Natural killer cell (primary cell): ENCODE measurements at regions of chr3 and their contacts with region 1.

Region 1: DNA sequence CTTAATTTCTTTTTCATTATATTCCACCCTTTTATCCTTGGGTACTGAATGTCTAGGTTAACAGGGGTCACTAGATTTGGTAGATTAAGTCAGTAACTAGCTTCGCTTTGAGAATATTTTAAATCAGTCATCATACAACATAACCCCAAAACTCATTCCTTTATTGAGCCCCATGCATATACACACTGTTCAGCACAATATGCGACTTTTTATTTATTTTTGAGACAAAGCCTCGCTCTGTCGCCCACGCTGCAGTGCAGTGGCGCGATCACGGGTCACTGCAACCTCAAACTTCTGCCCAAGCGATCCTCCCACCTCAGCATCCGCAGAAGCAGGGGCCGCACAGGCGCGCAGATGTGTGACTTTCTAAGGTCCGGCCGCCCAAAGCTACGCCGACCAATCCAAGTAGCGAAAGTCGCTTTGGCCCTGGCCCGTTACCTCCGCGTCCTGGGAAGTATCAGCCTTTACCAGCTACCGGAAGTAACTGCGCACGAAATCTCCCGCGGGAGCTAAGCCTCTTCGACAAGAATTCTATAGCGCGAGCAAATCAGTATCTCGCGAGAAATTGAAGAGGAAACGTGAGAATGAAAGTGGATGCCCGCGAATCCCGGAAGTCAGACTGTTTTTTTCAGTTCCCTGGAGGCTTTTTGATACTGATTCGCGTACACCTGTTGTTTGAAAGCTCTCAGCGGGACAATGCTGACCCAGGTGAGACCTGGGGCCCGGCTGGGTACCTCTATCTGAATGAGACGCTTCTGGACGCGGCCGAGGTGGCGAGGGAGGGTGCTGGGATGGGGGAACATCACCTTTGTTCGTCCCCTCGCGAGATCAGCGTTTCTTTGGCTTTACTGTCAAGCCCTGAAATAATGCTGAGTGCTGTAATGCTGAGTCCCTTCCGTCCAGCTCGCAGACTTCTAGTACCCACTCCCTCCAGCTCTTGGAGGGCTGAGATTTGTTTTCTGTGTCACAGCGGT is at the starts of genes DHFR2 and NSUN3:
- DNase-seq: peak; percentile 79 to 95
- ATAC-seq: peak; percentile 83 to 89 (median 86)
- H3K4me3 ChIP-seq: peak within 1 kb of the TSS; percentile 89
- H3K4me3 Mint-ChIP-seq: peak within 1 kb of the TSS; percentile 98
- H3K27ac ChIP-seq: peak within 1 kb of the TSS; percentile 98
- H3K27ac Mint-ChIP-seq: peak within 1 kb of the TSS; percentile 99
- H3K4me1 ChIP-seq: peaks cover 7% of the 10 kb centered on the region
- H3K4me1 Mint-ChIP-seq: peaks cover 37 to 44% of the 10 kb centered on the region in 2 donors
- H3K27me3 ChIP-seq: no peaks in the 10 kb centered on the region
- H3K27me3 Mint-ChIP-seq: no peaks in the 10 kb centered on the region
- CTCF ChIP-seq: no peak
- total RNA-seq, gene DHFR2: 2.5 to 5.0 (median 3.9) TPM
- total RNA-seq, gene NSUN3: 24.0 to 32.4 (median 28.6) TPM

Region 2: DNA sequence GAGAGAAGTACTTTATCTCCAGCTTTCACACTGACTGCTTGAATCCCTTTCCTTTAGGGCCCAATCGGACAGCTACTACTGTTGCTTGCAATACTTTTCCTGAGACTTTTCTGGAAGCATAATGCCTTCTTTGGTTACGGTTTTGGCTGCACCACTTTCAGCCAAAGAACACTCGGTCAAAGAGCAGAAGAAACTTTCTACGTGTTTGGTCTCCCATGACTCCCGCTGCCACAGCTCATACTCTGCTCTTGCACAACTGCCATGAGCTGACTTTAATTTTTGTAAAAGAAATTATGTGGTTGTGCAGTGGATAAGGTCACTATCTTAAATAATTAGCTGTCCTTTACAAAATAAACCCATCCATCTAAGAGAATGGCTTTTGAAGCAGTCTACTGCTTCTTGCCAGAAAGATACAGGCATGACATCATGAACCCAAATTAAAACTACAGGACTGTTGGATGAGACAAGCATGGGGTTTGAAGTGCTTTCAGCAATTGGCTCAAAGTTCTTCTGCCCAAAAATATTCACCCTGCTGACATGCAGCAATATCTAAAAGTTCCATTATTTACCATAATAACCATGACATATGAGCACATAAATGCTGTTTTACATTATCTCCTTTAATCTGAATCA is 131.0 kb before region 1 on chr3:
- intact Hi-C with region 1: no loop called
- DNase-seq: no peak
- ATAC-seq: no peak
- H3K4me3 ChIP-seq: no peak overlapping the region
- H3K4me3 Mint-ChIP-seq: no peak overlapping the region
- H3K27ac ChIP-seq: no peak overlapping the region
- H3K27ac Mint-ChIP-seq: no peak overlapping the region
- H3K4me1 ChIP-seq: no peaks in the 10 kb centered on the region
- H3K4me1 Mint-ChIP-seq: no peaks in the 10 kb centered on the region
- H3K27me3 ChIP-seq: no peaks in the 10 kb centered on the region
- H3K27me3 Mint-ChIP-seq: no peaks in the 10 kb centered on the region
- CTCF ChIP-seq: no peak

Region 3: DNA sequence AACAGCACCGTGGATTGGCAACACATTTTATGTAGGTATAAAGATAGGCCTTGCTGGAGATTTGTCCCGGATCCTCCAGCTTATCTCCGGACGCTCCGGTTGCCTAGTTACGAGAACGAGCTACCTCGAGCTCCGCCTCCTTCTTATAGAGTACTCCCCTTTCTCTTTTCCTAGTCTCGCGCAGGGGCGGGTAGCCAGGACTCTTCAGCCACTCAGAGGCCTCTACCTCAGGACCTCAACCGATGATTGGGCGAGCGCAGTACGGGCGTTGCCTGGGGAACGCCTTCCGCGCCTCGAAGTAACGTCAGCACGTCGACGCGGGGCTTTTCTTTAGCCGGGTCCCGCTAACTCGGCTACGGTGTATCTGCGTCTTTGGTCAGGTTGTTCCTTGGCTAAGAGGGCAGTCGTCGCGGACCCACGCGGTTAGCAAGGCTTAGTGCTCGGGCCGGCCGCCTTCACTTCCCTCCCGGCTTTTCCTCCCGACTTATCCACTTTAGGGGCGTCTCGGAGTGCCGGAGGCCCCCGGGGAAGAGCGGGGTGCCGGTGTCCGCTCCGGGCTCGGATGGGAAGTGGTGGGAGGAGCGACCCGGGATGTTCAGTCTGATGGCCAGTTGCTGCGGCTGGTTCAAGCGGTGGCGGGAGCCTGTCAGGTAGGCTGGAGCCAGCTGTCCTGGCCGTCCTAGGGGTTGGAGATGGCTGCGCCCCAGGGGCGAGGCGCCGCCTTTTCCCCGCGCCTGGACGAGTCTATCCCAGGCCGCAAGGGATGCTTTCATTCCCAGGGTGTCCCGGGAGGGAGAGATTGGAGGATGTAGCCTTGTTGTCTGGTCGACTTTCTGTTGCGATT is 82.7 kb before region 1 on chr3 and contains the start of gene ARL13B:
- intact Hi-C with region 1: loop called (anchors 1 kb)
- DNase-seq: peak; percentile 91 to 98
- ATAC-seq: peak; percentile 98 to 100 (median 99)
- H3K4me3 ChIP-seq: peak within 1 kb of the TSS; percentile 69
- H3K4me3 Mint-ChIP-seq: peak within 1 kb of the TSS; percentile 92
- H3K27ac ChIP-seq: peak within 1 kb of the TSS; percentile 90
- H3K27ac Mint-ChIP-seq: peak within 1 kb of the TSS; percentile 91 to 94
- H3K4me1 ChIP-seq: peaks cover 10% of the 10 kb centered on the region
- H3K4me1 Mint-ChIP-seq: peaks cover 15 to 20% of the 10 kb centered on the region in 2 donors
- H3K27me3 ChIP-seq: no peaks in the 10 kb centered on the region
- H3K27me3 Mint-ChIP-seq: peaks cover 4 to 8% of the 10 kb centered on the region in 2 donors
- CTCF ChIP-seq: no peak
- total RNA-seq, gene ARL13B: 8.3 to 14.3 (median 10.5) TPM

Region 4: GRCh38 chr3:94011233-94011711 is 51.4 kb before region 1 on chr3:
- intact Hi-C with region 1: no loop called
- DNase-seq: no peak
- ATAC-seq: no peak
- H3K4me3 ChIP-seq: no peak overlapping the region
- H3K4me3 Mint-ChIP-seq: no peak overlapping the region
- H3K27ac ChIP-seq: no peak overlapping the region
- H3K27ac Mint-ChIP-seq: no peak overlapping the region
- H3K4me1 ChIP-seq: no peaks in the 10 kb centered on the region
- H3K4me1 Mint-ChIP-seq: no peaks in the 10 kb centered on the region
- H3K27me3 ChIP-seq: no peaks in the 10 kb centered on the region
- H3K27me3 Mint-ChIP-seq: no peaks in the 10 kb centered on the region
- CTCF ChIP-seq: no peak